CD8-positive, alpha-beta T cell (primary cell): ENCODE measurements at regions of chr4 and their contacts with region 1.

Region 1: DNA sequence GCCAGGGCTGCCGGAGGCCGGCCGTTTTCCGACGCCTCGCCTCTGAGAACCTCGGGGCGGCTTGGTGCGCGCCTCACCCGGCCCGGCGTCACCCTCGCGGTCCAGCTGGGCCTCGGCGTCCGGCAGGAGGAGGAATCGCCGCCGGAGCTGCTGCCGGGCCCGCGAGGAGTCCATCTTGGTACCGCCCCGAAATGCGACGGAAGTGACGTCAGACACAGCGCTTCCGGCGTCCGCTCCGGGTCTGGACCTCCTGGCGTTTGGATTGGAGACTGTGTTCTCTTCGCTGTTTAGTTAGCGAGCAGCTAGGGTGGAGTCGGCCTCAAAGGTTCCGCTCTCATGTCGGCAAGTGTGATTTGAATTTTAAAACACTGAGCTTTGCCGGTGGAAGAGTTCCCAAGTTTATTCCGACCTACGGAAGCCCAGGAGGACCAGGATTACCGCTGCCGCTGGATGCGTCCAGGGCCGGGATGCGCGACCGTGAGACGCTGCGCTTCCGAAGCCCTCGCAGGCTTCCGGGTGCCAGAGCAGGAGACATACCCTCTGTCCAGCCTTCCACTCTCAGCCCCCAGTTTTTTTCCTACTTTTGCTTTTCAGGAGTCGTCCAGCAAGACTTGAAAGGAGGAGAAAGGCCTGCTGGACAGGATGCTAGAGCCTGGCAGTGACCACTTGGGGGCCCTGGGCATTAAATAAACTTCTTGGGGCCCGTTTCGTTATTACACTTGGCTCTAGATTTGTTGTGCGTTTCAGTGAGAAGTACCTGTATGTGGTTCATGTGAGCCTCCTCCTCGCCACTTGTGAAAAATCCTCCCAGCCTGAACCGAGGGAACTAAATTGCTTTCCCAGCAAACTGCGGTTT is at the start of gene TMEM128:
- DNase-seq: peak; percentile 85 to 96 (median 93)
- ATAC-seq: peak; percentile 95
- H3K4me3 ChIP-seq: peak within 1 kb of the TSS; percentile 85 to 89
- H3K4me3 Mint-ChIP-seq: peak within 1 kb of the TSS; percentile 96
- H3K27ac ChIP-seq: peak within 1 kb of the TSS; percentile 89 to 95
- H3K27ac Mint-ChIP-seq: peak within 1 kb of the TSS; percentile 99
- H3K4me1 ChIP-seq: peaks cover 17% of the 10 kb centered on the region
- H3K4me1 Mint-ChIP-seq: peaks cover 42% of the 10 kb centered on the region
- H3K27me3 ChIP-seq: no peaks in the 10 kb centered on the region
- H3K27me3 Mint-ChIP-seq: no peaks in the 10 kb centered on the region
- CTCF ChIP-seq: no peak
- total RNA-seq, gene TMEM128: 6.4 TPM

Region 2: DNA sequence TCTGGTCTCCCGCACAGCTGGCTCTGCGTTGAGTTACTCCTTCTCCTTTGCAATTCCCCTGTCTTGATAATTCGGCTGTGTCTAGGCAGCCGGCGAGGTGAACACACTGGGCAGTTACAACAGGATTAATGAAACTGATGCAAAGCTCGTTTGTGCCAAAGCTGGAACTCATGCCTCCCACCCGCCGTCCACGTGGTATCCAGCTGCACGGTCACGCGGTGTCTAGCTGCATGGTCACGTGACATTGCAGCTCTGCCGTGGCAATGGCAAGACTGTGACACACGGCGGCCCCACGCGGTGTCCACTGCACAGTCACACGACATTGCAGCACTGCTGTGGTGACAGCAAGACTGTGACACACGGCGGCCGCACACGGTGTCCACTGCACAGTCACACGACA is 684.9 kb before region 1 on chr4:
- CTCF ChIA-PET with region 1: no interaction called
- POLR2A ChIA-PET with region 1: no interaction called
- intact Hi-C with region 1: no loop called
- DNase-seq: no peak
- ATAC-seq: no peak
- H3K4me3 ChIP-seq: no peak overlapping the region
- H3K4me3 Mint-ChIP-seq: no peak overlapping the region
- H3K27ac ChIP-seq: no peak overlapping the region
- H3K27ac Mint-ChIP-seq: no peak overlapping the region
- H3K4me1 ChIP-seq: no peaks in the 10 kb centered on the region
- H3K4me1 Mint-ChIP-seq: no peaks in the 10 kb centered on the region
- H3K27me3 ChIP-seq: no peaks in the 10 kb centered on the region
- H3K27me3 Mint-ChIP-seq: peaks cover 4% of the 10 kb centered on the region
- CTCF ChIP-seq: no peak

Region 3: DNA sequence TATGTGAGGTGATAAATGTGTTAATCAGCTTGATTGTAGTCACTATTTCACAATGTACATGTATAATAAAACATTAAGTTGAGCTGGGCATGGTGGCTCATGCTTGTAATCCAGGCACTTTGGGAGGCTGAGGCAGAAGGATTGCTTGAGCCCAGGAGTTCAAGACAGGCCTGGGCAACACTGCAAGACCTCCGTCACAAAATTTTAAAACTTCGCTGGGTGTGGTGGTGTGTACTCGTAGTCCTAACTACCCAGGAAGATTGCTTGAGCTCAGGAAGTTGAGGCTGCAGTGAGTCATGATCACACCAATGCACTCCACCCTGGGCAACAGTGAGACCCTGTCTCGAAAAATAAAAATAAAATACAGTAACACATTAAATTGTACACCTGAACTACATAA is 21.6 kb after region 1 on chr4:
- CTCF ChIA-PET with region 1: interaction called, 6 read pairs
- POLR2A ChIA-PET with region 1: interaction called, 8 read pairs
- intact Hi-C with region 1: loop called in 1 of 2 experiments (anchors 2 kb)
- DNase-seq: peak in 6 of 9 experiments; percentile 39 to 81 (median 70)
- ATAC-seq: peak; percentile 77
- H3K4me3 ChIP-seq: no peak overlapping the region
- H3K4me3 Mint-ChIP-seq: peak overlapping the region; percentile 77
- H3K27ac ChIP-seq: peak overlapping the region; percentile 81 to 90
- H3K27ac Mint-ChIP-seq: peak overlapping the region; percentile 95
- H3K4me1 ChIP-seq: peaks cover 22% of the 10 kb centered on the region
- H3K4me1 Mint-ChIP-seq: peaks cover 52% of the 10 kb centered on the region
- H3K27me3 ChIP-seq: no peaks in the 10 kb centered on the region
- H3K27me3 Mint-ChIP-seq: no peaks in the 10 kb centered on the region
- CTCF ChIP-seq: no peak

Region 4: DNA sequence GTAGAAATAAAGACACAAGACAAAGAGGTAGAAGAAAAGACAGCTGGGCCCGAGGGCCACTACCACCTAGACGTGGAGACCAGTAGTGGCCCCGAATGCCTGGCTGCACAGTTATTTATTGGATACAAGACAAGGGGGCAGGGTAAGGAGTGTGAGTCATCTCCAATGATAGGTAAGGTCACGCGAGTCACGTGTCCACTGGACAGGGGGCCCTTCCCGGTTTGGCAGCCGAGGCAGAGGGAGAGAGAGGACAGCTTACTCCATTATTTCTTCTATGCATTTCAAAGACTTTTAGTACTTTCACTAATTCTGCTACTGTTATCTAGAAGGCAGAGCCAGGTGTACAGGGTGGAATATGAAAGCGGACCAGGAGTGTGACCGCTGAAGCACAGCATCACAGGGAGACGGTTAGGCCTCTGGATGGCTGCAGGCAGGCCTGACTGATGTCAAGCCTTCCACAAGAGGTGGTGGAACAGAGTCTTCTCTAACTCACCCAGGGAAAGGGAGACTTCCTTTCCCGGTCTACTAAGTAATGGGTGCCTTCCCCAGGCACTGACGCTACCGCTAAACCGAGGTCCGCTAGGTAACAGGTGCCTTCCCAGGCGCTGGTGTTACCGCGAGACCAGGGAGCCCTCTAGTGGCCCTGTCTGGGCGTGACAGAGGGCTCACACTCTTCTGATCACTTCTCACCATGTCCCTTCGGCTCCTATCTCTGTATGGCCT is 86.7 kb after region 1 on chr4:
- CTCF ChIA-PET with region 1: interaction called, 41 read pairs
- POLR2A ChIA-PET with region 1: no interaction called
- intact Hi-C with region 1: loop called (anchors 1 kb)
- DNase-seq: peak; percentile 55 to 88 (median 77)
- ATAC-seq: peak; percentile 100
- H3K4me3 ChIP-seq: no peak overlapping the region
- H3K4me3 Mint-ChIP-seq: peak overlapping the region; percentile 43
- H3K27ac ChIP-seq: no peak overlapping the region
- H3K27ac Mint-ChIP-seq: peak overlapping the region; percentile 49
- H3K4me1 ChIP-seq: peaks cover 6% of the 10 kb centered on the region
- H3K4me1 Mint-ChIP-seq: peaks cover 17% of the 10 kb centered on the region
- H3K27me3 ChIP-seq: no peaks in the 10 kb centered on the region
- H3K27me3 Mint-ChIP-seq: no peaks in the 10 kb centered on the region
- CTCF ChIP-seq: peak; percentile 65

Region 5: DNA sequence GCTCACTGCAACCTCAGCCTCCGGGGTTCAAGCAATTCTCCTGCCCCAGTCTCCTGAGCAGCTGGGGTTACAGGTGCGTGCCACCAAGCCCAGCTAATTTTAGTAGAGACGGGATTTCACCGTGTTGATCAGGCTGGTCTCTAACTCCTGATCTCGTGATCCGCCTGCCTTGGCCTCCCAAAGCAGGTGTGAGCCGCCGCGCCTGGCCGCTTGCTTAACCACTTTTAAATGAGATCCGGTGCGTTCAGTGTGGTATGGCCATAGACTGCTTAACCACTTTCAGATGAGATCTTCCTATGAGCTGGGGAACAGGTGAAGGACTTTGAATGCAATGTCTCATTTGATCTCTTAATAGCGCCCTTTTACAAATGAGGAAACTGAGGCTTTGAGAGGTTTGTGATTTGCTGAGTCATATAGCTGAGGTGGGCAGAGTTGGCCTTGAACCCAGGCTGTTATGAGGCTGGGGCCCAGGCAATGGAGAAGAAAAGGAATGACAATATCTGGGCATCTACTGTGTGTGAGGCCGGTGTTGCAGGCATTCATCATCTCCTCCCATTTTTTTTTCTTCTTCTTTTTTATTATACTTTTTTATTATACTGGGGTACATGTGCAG is 96.8 kb after region 1 on chr4:
- CTCF ChIA-PET with region 1: interaction called, 4 read pairs
- POLR2A ChIA-PET with region 1: interaction called, 12 read pairs
- intact Hi-C with region 1: no loop called
- DNase-seq: peak in 1 of 9 experiments; percentile 11
- ATAC-seq: no peak
- H3K4me3 ChIP-seq: no peak overlapping the region
- H3K4me3 Mint-ChIP-seq: no peak overlapping the region
- H3K27ac ChIP-seq: no peak overlapping the region
- H3K27ac Mint-ChIP-seq: no peak overlapping the region
- H3K4me1 ChIP-seq: peaks cover 38% of the 10 kb centered on the region
- H3K4me1 Mint-ChIP-seq: peaks cover 61% of the 10 kb centered on the region
- H3K27me3 ChIP-seq: no peaks in the 10 kb centered on the region
- H3K27me3 Mint-ChIP-seq: no peaks in the 10 kb centered on the region
- CTCF ChIP-seq: no peak

Region 6: GRCh38 chr4:4386736-4387392 is 138.6 kb after region 1 on chr4 and contains the start of gene NSG1:
- CTCF ChIA-PET with region 1: no interaction called
- POLR2A ChIA-PET with region 1: interaction called, 8 read pairs
- intact Hi-C with region 1: loop called (anchors 1 to 2 kb)
- DNase-seq: peak in 8 of 9 experiments; percentile 29 to 72 (median 53)
- ATAC-seq: peak; percentile 66
- H3K4me3 ChIP-seq: peak within 1 kb of the TSS; percentile 58 to 76
- H3K4me3 Mint-ChIP-seq: peak within 1 kb of the TSS; percentile 93
- H3K27ac ChIP-seq: peak within 1 kb of the TSS; percentile 30 to 35
- H3K27ac Mint-ChIP-seq: peak within 1 kb of the TSS; percentile 82
- H3K4me1 ChIP-seq: peaks cover 14% of the 10 kb centered on the region
- H3K4me1 Mint-ChIP-seq: peaks cover 25% of the 10 kb centered on the region
- H3K27me3 ChIP-seq: no peaks in the 10 kb centered on the region
- H3K27me3 Mint-ChIP-seq: peaks cover 7% of the 10 kb centered on the region
- CTCF ChIP-seq: no peak
- total RNA-seq, gene NSG1: 14.2 to 15.8 TPM

Region 7: DNA sequence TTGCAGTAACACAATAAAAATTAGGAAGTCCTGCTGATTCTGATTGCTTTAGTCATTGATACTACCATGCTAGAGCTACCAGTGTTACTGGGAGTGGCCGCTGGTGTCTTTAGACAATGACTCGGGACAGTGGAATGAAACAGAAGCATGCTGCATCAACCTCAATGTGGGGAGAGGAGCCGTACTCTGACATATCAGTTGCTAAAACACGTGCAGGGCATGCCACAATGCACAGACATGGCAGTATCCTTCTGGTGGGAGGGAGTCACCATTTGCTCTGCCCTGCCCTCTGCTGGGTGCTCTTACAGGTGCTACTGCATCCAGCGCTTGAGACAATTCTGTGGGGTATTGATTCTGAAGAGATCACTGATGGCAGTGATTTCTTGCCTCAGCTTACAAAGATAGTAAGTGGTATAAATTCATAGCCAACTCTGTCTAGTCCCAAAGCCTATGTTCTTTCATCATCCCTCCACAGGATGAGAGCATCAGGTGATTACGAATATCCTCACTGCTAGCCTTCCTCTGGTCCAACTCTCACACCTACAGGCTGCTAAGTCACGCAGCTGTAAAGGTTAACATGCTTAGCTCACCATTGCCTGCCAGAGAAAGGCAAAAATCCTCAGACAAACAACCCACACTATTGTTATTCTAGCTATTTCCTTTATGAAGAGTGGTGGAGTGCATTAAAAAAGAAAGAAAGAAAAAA is 182.4 kb after region 1 on chr4:
- CTCF ChIA-PET with region 1: interaction called, 32 read pairs
- POLR2A ChIA-PET with region 1: interaction called, 3 read pairs
- intact Hi-C with region 1: loop called (anchors 1 kb)
- DNase-seq: peak; percentile 21 to 74 (median 59)
- ATAC-seq: peak; percentile 99
- H3K4me3 ChIP-seq: no peak overlapping the region
- H3K4me3 Mint-ChIP-seq: no peak overlapping the region
- H3K27ac ChIP-seq: no peak overlapping the region
- H3K27ac Mint-ChIP-seq: peak overlapping the region; percentile 52
- H3K4me1 ChIP-seq: peaks cover 6% of the 10 kb centered on the region
- H3K4me1 Mint-ChIP-seq: peaks cover 4% of the 10 kb centered on the region
- H3K27me3 ChIP-seq: no peaks in the 10 kb centered on the region
- H3K27me3 Mint-ChIP-seq: no peaks in the 10 kb centered on the region
- CTCF ChIP-seq: peak; percentile 72

Region 8: GRCh38 chr4:4541661-4542570 is 293.7 kb after region 1 on chr4 and contains the start of gene STX18:
- CTCF ChIA-PET with region 1: interaction called, 3 read pairs
- POLR2A ChIA-PET with region 1: interaction called, 7 read pairs
- intact Hi-C with region 1: loop called (anchors 1 kb)
- DNase-seq: peak; percentile 81 to 95 (median 88)
- ATAC-seq: peak; percentile 95
- H3K4me3 ChIP-seq: peak within 1 kb of the TSS; percentile 91 to 93
- H3K4me3 Mint-ChIP-seq: peak within 1 kb of the TSS; percentile 95
- H3K27ac ChIP-seq: peak within 1 kb of the TSS; percentile 68 to 86
- H3K27ac Mint-ChIP-seq: peak within 1 kb of the TSS; percentile 95
- H3K4me1 ChIP-seq: peaks cover 28% of the 10 kb centered on the region
- H3K4me1 Mint-ChIP-seq: peaks cover 63% of the 10 kb centered on the region
- H3K27me3 ChIP-seq: no peaks in the 10 kb centered on the region
- H3K27me3 Mint-ChIP-seq: no peaks in the 10 kb centered on the region
- CTCF ChIP-seq: no peak
- total RNA-seq, gene STX18: 12.6 to 15.6 TPM